Heart right ventricle (tissue), 16 donors: ENCODE measurements at regions of chr15 and their contacts with region 1.

Region 1: DNA sequence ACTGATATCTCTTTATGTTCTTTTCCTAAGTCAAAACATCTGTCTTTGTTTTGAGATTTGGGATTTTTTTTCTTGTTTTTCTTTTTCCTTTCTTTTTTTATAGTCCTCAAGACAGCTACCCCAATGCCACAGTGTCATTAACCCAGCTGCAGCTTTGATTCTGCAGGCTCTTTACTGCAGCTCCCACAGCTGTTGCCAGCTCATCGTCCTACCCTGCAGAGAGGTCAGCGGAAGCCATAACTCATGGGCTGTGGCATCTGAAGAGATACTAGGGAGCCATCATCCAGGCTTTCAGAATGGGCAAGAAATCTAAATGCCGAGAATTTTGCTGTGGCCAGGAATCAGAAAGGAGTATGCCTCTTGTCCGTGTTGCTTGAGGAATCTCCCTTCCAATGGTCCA is 44.3 kb upstream of the SLC24A5 start:
- DNase-seq: no peak
- ATAC-seq: no peak
- H3K4me3 ChIP-seq: no peak overlapping the region
- H3K27ac ChIP-seq: no peak overlapping the region
- H3K4me1 ChIP-seq: no peaks in the 10 kb centered on the region
- H3K27me3 ChIP-seq: peaks cover 0 to 33% (median 19%) of the 10 kb centered on the region in 7 donors
- CTCF ChIP-seq: no peak

Region 2: DNA sequence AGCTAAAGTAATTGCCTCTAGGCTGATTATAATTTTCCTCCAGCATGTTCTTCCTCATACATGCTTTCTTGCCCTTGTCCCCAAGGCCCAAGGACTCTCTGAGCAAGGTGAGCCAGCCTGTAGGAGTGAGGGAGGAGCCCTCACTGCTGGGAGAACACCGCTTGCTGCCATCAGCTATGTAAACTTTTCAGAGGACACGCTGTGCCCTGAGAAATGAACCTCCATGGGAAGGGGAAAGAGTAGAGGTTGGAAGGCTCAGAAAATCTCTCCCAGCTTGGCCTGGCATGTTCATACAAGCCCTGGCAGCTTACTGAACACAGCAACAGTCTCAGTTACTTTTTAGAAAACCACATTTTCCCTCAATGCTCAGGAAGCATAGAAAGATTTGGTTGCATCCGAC is 58.7 kb before region 1 on chr15:
- intact Hi-C with region 1: loop called in 1 of 10 experiments (anchors 10 kb)
- DNase-seq: no peak
- ATAC-seq: no peak
- H3K4me3 ChIP-seq: no peak overlapping the region
- H3K27ac ChIP-seq: no peak overlapping the region
- H3K4me1 ChIP-seq: no peaks in the 10 kb centered on the region
- H3K27me3 ChIP-seq: peaks cover 0 to 8% (median 0%) of the 10 kb centered on the region in 7 donors
- CTCF ChIP-seq: no peak